ENCODE measurements at regions of chr11 and their contacts with region 1.

Region 1: DNA sequence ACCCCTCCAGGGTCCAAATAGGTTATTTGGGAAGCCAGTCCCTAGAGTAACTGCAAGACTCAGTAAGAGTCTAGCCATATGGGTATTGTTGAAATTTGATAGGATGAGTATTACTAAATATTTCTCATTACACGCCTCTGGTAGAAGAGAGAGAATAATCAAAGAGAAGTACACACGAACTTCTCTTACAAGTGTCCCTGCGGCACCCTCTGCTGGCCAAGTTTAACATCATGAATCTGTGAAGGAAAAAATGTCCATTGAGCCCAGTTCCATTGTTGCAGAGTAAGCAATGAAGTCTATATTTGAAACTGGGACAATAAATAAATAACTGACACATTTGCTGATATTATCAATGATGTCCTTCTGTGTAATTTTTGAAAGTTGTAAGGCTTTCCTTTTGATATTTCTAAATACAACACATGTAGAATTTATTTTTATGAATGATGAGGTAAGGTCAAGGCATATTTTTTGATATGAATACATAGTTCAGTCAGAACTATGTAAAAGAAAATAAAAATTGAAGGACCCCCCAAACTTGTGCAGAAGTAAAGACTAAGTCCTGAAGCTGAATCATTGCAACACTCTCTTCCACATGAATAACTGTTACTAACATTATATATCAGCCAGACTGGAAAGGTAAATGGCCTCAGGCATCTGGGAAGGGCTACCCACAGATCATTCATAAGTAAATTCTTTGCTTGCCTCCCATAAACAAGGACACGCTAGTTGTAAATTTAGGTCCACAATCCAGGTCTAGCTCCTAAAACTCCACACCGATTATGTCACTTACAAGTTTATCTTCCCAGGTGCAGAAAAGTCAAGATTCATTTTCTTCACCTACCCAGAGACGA is 10.0 kb downstream of the OR51L1 start:
- DNase-seq: peak; percentile 61
- ATAC-seq: peak; percentile 73
- H3K4me3 ChIP-seq: no peak overlapping the region
- H3K27ac ChIP-seq: no peak overlapping the region
- H3K4me1 ChIP-seq: no peaks in the 10 kb centered on the region
- H3K27me3 ChIP-seq: no peaks in the 10 kb centered on the region; the same call in 1 of the 2 replicates
- CTCF ChIP-seq: peak; percentile 78
- POLR2A ChIP-seq: no peak
- RAD21 ChIP-seq: peak; percentile 80

Region 2: GRCh38 chr11:4826425-4826824 is 178.2 kb before region 1 on chr11:
- CTCF ChIA-PET with region 1: no interaction called
- POLR2A ChIA-PET with region 1: no interaction called
- dilution Hi-C with region 1: no loop called
- in situ Hi-C with region 1: no loop called
- intact Hi-C with region 1: loop called (anchors 10 kb)
- DNase-seq: peak; percentile 44
- ATAC-seq: peak; percentile 54
- H3K4me3 ChIP-seq: no peak overlapping the region
- H3K27ac ChIP-seq: no peak overlapping the region
- H3K4me1 ChIP-seq: no peaks in the 10 kb centered on the region
- H3K27me3 ChIP-seq: no peaks in the 10 kb centered on the region; the same call in 1 of the 2 replicates
- CTCF ChIP-seq: peak; percentile 69
- POLR2A ChIP-seq: no peak
- RAD21 ChIP-seq: peak; percentile 81

Region 3: DNA sequence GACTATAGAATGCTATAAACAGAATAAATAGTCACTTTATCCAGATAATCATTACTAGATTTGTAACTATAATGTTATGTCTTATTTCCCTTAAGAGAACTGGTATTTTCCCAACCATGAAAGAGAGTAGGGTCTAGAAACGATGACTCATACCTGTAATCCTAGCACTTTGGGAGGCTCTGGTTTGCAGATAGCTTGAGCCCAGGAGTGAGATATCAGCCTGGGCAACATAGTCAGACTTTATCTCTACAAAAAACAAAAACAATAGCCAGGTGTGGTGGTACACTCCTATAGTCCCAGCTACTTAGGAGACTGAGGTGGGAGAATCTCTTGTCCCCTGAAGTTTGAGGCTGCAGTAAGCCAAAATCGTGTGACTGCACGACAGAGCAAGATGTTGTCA is 102.6 kb after region 1 on chr11:
- CTCF ChIA-PET with region 1: no interaction called
- POLR2A ChIA-PET with region 1: no interaction called
- dilution Hi-C with region 1: no loop called
- in situ Hi-C with region 1: no loop called
- intact Hi-C with region 1: no loop called
- DNase-seq: no peak
- ATAC-seq: no peak
- H3K4me3 ChIP-seq: no peak overlapping the region
- H3K27ac ChIP-seq: no peak overlapping the region
- H3K4me1 ChIP-seq: no peaks in the 10 kb centered on the region
- H3K27me3 ChIP-seq: 0 out of 2 replicates have a peak, but pooled peaks cover 2% of the 10 kb centered on the region
- CTCF ChIP-seq: no peak
- POLR2A ChIP-seq: no peak
- RAD21 ChIP-seq: no peak

Region 4: DNA sequence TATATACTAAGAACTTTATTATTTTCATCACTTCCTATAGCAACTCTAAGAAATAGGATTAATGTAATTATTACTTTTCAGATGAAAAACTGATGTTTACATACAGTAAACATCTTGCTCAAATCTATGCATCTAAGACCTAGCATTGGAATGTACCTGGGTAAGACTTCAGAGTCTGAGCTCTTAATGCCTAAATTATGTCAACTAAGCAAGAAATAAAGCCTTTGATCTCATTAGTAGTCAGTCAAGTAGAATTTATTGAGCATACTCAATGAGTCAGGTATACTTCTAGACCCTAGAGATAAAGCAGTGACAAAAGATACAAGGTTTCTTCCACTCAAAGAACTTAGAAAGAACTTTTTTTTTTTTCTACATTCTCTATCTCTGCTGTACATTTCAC is 400.5 kb after region 1 on chr11:
- CTCF ChIA-PET with region 1: no interaction called
- POLR2A ChIA-PET with region 1: no interaction called
- dilution Hi-C with region 1: no loop called
- in situ Hi-C with region 1: no loop called
- intact Hi-C with region 1: no loop called
- DNase-seq: no peak
- ATAC-seq: no peak
- H3K4me3 ChIP-seq: no peak overlapping the region
- H3K27ac ChIP-seq: no peak overlapping the region
- H3K4me1 ChIP-seq: no peaks in the 10 kb centered on the region
- H3K27me3 ChIP-seq: no peaks in the 10 kb centered on the region
- CTCF ChIP-seq: no peak
- POLR2A ChIP-seq: no peak
- RAD21 ChIP-seq: no peak

Measured in IMR-90 (cell line).